ENCODE measurements at regions of chr20 and their contacts with region 1.

Region 1: DNA sequence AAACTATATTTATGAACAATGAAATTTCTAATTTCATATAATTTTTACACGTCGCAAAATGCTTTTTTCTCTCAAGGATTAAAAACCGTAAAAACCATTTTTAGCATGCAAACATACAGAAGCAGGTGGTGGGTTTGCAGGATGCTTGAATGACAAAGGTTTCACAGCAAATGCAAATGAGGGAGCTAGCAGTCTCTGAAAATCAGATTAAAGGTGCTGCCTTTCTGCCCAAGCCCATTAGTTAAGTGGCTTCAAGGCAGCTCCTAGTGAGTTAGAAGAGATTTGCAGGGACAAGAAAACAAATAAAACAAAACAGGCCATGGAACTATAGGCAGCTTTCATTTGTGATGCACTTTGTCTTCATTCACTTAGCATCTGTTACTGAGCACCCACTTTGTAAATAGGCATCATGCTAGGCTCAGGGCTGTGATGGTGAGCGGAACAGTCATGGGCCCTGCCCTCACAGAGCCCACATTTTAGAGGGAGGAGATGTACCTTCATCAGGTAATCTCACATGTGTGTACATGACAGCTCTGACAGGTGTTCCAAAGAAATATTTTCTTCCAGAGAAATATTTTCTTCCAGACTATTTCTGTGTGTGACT is 29.5 kb downstream of the NAPB start:
- DNase-seq: no peak
- H3K4me3 ChIP-seq: no peak overlapping the region
- H3K27ac ChIP-seq: no peak overlapping the region
- H3K4me1 ChIP-seq: peaks cover 0 to 4% (median 0%) of the 10 kb centered on the region in 4 experiments
- H3K27me3 ChIP-seq: no peaks in the 10 kb centered on the region

Region 2: GRCh38 chr20:23368316-23368715 is 23.5 kb before region 1 on chr20:
- CTCF ChIA-PET with region 1: interaction called, 12 read pairs
- POLR2A ChIA-PET with region 1: no interaction called
- DNase-seq: no peak
- H3K4me3 ChIP-seq: no peak overlapping the region
- H3K27ac ChIP-seq: no peak overlapping the region
- H3K4me1 ChIP-seq: peaks cover 8 to 22% (median 17%) of the 10 kb centered on the region in 4 experiments
- H3K27me3 ChIP-seq: no peaks in the 10 kb centered on the region

Region 3: GRCh38 chr20:23702021-23702420 is 310.2 kb after region 1 on chr20:
- CTCF ChIA-PET with region 1: no interaction called
- POLR2A ChIA-PET with region 1: no interaction called
- DNase-seq: no peak
- H3K4me3 ChIP-seq: no peak overlapping the region
- H3K27ac ChIP-seq: no peak overlapping the region
- H3K4me1 ChIP-seq: no peaks in the 10 kb centered on the region
- H3K27me3 ChIP-seq: no peaks in the 10 kb centered on the region

Measured in common myeloid progenitor, CD34-positive (primary cell).